ENCODE measurements at regions of chr6 and their contacts with region 1.

Region 1: GRCh38 chr6:116268589-116269293 is 11.0 kb downstream of the TSPYL1 start:
- DNase-seq: peak; percentile 41
- CTCF ChIP-seq: peak; percentile 80

Region 2: DNA sequence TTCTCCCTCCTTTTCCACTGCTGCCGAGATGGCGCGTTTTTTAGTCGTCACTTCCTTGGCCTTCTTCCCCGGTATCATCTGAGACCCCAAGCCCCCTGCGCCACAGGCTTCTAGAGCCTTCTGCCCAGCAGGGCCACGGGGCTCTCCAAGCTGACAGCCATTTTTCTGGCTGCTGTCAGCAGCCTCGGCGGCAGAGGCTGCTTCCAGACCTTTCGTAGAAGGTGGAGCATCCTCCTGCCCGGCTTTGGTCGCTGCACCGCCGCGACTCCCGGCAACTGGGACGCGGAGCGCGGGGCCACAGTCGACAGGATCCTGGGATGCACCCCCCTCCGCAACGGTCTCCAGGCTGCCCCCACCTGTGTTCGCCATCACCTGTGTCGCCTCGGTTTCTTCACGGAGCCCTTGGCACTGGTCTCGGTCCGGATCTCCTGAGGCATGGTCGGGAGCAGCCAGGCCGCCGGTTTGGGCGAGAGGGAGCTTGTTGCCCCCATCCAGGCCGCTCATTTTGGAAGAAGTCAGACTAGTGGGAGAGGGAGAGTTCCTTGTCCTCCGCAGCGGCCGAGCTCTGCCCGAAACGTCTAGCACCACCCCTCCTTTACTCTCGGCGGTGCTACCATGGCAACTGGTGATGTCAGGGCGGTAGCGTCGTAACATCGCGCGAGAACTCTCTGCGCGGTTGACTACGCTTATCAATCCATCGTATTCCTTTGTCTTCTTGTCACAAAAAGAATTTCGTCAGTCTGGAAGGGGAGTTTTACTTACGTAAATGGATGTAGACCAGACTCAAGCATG is 15.0 kb before region 1 on chr6 and contains the start of gene TSPYL4:
- CTCF ChIA-PET with region 1: interaction called, 49 read pairs
- POLR2A ChIA-PET with region 1: no interaction called
- DNase-seq: peak; percentile 91
- CTCF ChIP-seq: no peak

Region 3: DNA sequence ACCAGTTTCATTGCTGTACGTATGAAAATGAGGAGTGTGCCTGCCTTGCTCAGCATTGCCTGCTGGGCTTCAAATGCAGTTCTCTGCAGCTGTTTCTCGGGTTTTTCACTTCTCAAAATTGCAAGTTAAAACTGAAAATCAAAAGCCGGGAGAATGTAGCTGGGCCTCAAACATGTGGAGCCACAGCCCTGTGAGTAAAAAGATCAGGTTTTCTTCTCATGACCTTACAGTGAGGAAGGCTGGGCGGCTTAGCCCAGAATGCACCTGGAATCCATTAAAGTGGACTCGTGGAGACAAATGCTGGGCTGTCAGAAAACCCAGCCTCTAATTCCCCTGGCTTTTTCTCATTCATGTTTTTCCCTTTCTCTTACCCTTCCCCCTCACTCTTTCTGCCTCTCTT is 136.4 kb after region 1 on chr6:
- CTCF ChIA-PET with region 1: interaction called, 10 read pairs
- POLR2A ChIA-PET with region 1: no interaction called
- DNase-seq: peak; percentile 42
- CTCF ChIP-seq: no peak

Region 4: GRCh38 chr6:116531675-116532570 is 263.2 kb after region 1 on chr6:
- CTCF ChIA-PET with region 1: interaction called, 62 read pairs
- POLR2A ChIA-PET with region 1: no interaction called
- DNase-seq: peak; percentile 58
- CTCF ChIP-seq: peak; percentile 76

Region 5: GRCh38 chr6:116570856-116571682 is 302.3 kb after region 1 on chr6 and contains the start of gene RWDD1:
- CTCF ChIA-PET with region 1: interaction called, 20 read pairs
- POLR2A ChIA-PET with region 1: no interaction called
- DNase-seq: peak; percentile 97
- CTCF ChIP-seq: no peak

Measured in GM10248 (cell line).